ENCODE measurements at regions of chr3 and their contacts with region 1.

Region 1: GRCh38 chr3:196440041-196440537 is 7.9 kb upstream of the UBXN7 start:
- DNase-seq: no peak
- H3K4me3 ChIP-seq: no peak overlapping the region
- H3K27ac ChIP-seq: no peak overlapping the region
- H3K4me1 ChIP-seq: no peaks in the 10 kb centered on the region
- H3K27me3 ChIP-seq: no peaks in the 10 kb centered on the region
- CTCF ChIP-seq: no peak

Region 2: DNA sequence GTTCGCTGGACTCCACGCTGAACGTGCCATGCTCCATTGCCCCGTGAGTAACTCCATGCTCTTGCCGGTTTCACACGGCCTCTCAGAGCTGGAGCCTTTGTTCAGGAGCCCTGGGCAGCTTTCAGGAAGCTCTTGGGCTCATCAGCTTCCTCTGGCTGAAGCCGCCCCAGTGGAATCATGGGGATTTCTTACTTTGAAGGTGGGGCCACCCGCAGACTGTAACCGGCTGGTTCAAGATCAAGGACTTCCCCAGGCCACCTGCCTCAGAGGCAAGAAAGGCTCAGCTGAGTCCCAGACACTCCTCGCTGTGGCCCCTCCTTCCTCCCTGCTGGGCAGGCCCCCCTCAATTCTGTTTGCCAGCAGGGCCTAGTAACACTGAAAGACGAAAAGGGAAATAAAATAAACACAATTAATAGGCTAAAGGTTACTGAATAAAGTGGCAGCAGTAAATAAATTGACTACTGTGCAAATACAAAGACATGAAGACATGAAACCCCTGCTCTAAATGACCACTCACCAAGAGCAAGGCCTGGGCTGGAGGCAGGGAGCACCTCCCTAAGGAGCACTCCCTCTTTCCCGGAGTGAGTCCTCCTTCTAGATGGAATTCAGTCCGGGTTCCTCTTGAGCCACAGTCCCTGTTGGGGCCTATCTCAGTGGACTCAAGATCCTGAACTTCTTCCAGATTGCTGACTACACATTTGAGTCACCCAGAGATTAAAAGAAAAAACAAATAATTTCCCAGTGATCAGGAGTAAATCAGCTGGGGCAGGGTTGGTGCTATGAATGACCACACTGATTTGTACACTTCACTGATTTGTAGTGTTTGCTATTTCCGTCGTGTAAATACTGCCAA is 279.9 kb before region 1 on chr3:
- CTCF ChIA-PET with region 1: no interaction called
- dilution Hi-C with region 1: loop called (anchors 10 kb)
- in situ Hi-C with region 1: no loop called
- intact Hi-C with region 1: no loop called
- DNase-seq: peak; percentile 48
- H3K4me3 ChIP-seq: no peak overlapping the region
- H3K27ac ChIP-seq: no peak overlapping the region
- H3K4me1 ChIP-seq: no peaks in the 10 kb centered on the region
- H3K27me3 ChIP-seq: no peaks in the 10 kb centered on the region
- CTCF ChIP-seq: no peak

Region 3: GRCh38 chr3:196227629-196228493 is 212.2 kb before region 1 on chr3:
- CTCF ChIA-PET with region 1: no interaction called
- dilution Hi-C with region 1: loop called (anchors 10 kb)
- in situ Hi-C with region 1: no loop called
- intact Hi-C with region 1: no loop called
- DNase-seq: no peak
- H3K4me3 ChIP-seq: no peak overlapping the region
- H3K27ac ChIP-seq: no peak overlapping the region
- H3K4me1 ChIP-seq: no peaks in the 10 kb centered on the region
- H3K27me3 ChIP-seq: no peaks in the 10 kb centered on the region
- CTCF ChIP-seq: no peak

Region 4: DNA sequence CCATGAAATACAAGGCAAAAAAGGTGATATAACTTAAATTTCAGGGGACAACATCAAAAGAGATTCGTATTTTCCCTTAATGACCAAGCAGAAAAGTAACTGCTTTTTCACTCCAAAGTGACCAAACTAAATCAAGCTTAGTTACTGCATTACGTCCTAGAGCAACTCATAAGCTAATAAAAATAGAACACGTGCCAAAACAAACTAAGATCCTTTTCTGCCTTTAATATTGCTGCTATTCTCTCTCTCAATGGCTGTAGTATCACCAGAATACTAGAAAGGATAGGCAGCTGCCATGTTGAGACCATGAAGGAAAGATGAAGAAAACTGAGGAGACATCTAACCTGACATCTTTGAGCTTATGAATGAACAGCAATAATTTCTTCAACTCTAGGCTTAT is 51.1 kb before region 1 on chr3:
- CTCF ChIA-PET with region 1: no interaction called
- dilution Hi-C with region 1: loop called (anchors 10 kb)
- in situ Hi-C with region 1: no loop called
- intact Hi-C with region 1: no loop called
- DNase-seq: no peak
- H3K4me3 ChIP-seq: no peak overlapping the region
- H3K27ac ChIP-seq: no peak overlapping the region
- H3K4me1 ChIP-seq: no peaks in the 10 kb centered on the region
- H3K27me3 ChIP-seq: no peaks in the 10 kb centered on the region
- CTCF ChIP-seq: no peak

Region 5: GRCh38 chr3:197076415-197076814 is 636.3 kb after region 1 on chr3:
- CTCF ChIA-PET with region 1: no interaction called
- dilution Hi-C with region 1: no loop called
- in situ Hi-C with region 1: no loop called
- intact Hi-C with region 1: no loop called
- DNase-seq: no peak
- H3K4me3 ChIP-seq: no peak overlapping the region
- H3K27ac ChIP-seq: no peak overlapping the region
- H3K4me1 ChIP-seq: no peaks in the 10 kb centered on the region
- H3K27me3 ChIP-seq: no peaks in the 10 kb centered on the region
- CTCF ChIP-seq: no peak

Measured in mammary epithelial cell (primary cell).